ENCODE measurements at regions of chr13 and their contacts with region 1.

Region 1: GRCh38 chr13:44710576-44710975 is 134.4 kb upstream of the TSC22D1 start:
- DNase-seq: peak; percentile 48 to 89
- H3K4me3 ChIP-seq: no peak overlapping the region
- H3K27ac ChIP-seq: peak overlapping the region; percentile 94
- H3K4me1 ChIP-seq: peaks cover 60% of the 10 kb centered on the region
- H3K27me3 ChIP-seq: no peaks in the 10 kb centered on the region
- CTCF ChIP-seq: no peak

Region 2: DNA sequence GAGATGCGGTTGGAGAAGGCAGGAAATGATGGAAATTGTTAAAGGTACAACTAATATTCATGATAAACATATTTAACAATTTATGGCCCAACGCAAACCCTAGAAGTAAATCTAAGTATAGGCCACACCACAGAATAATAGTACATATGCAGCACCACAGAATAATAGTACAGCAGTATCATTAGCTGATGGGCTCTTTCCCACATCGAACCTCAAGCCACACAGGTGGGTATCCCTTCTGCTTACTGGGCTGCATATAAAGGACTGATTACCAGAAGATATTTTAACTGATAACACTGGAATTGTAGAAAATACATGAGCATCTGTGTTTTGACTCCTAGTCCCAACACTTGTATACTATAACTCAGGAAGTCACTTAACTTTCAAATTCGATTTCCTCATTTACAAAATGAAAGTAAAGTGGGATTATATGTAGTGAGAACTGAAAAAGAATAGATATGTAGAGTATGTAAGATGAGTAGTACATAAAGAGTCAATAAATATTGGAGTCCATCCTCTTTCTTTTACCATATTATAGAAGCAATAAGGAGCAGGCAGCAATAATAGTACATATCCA is 225.9 kb before region 1 on chr13:
- CTCF ChIA-PET with region 1: interaction called, 3 read pairs
- POLR2A ChIA-PET with region 1: interaction called, 3 read pairs
- intact Hi-C with region 1: loop called (anchors 10 kb)
- DNase-seq: no peak
- H3K4me3 ChIP-seq: no peak overlapping the region
- H3K27ac ChIP-seq: peak overlapping the region; percentile 28; the same call in 1 of the 2 replicates
- H3K4me1 ChIP-seq: peaks cover 3% of the 10 kb centered on the region; the same call in 1 of the 2 replicates
- H3K27me3 ChIP-seq: no peaks in the 10 kb centered on the region
- CTCF ChIP-seq: no peak

Region 3: DNA sequence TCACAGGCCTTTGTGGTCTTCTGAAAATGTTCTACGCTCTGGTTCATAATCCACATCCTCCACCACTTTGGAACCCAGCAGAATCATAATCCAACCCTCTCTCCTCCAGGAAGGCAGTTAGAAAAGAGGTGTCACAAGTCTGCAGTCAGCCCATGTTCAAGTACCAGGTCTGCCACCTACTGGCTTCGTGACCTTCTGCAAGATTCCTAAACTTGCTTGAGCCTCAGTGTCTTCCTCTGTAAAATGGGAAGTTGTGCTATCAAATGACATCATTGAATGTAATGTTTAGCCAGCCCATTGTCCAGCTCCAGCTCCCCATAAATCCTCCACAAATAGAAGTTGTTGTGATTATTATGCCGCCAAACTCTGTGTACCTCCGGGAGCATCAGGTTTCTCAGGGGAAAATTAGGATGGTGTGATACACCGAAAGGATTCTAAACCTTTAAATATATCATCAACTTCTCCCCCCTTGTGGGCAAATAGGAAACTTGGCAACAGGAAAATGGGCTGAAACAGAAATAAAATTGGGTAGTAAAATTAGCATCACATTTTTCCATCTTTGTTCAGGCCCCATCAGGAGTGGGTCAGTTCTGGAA is 169.0 kb after region 1 on chr13:
- CTCF ChIA-PET with region 1: no interaction called
- POLR2A ChIA-PET with region 1: no interaction called
- intact Hi-C with region 1: no loop called
- DNase-seq: peak in 1 of 2 experiments; percentile 12
- H3K4me3 ChIP-seq: no peak overlapping the region
- H3K27ac ChIP-seq: no peak overlapping the region
- H3K4me1 ChIP-seq: no peaks in the 10 kb centered on the region
- H3K27me3 ChIP-seq: no peaks in the 10 kb centered on the region
- CTCF ChIP-seq: peak; percentile 65

Region 4: DNA sequence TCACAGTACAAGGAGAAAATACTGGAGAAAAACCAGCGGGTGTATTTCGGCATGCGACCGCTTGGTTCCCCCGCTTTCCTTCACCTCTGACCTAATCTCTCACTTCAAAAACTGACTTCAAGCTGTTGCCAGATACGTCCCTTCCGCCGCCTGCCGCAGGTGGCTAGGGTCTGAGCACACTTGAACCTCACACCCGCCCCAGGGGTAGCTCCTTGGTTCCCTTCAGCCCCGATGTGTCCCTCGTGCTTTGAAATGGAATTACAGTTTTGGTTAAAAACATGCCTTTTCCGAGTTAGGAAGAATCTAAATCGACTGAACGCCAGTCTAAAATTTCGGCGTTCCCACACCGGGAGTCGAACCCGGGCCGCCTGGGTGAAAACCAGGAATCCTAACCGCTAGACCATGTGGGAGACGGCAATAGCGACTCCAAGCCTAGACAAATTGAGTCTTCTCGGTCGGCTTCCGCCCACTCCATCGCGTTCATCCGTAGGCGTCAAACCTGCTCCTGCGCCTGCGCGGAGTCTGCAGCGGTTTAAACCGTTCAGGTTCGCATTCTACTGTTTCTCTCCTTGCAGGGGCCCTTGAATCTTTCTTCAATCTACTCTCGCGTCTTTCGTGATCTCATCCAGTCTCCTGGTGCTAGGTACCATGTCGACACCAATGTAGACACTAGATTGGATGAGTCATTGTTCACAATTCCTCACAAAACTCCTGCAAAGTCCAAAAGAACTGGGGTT is 207.2 kb after region 1 on chr13:
- CTCF ChIA-PET with region 1: no interaction called
- POLR2A ChIA-PET with region 1: interaction called, 6 read pairs
- intact Hi-C with region 1: loop called (anchors 1 kb)
- DNase-seq: peak; percentile 91 to 94
- H3K4me3 ChIP-seq: peak overlapping the region; percentile 63
- H3K27ac ChIP-seq: peak overlapping the region; percentile 86
- H3K4me1 ChIP-seq: peaks cover 34% of the 10 kb centered on the region
- H3K27me3 ChIP-seq: no peaks in the 10 kb centered on the region
- CTCF ChIP-seq: peak; percentile 37; the same call in 1 of the 2 replicates

Measured in PC-9 (cell line).